Activated CD4-positive, alpha-beta memory T cell treated with anti-CD3 and anti-CD28 coated beads for 36 hours (primary cell): ENCODE measurements at regions of chr1 and their contacts with region 1.

Region 1: DNA sequence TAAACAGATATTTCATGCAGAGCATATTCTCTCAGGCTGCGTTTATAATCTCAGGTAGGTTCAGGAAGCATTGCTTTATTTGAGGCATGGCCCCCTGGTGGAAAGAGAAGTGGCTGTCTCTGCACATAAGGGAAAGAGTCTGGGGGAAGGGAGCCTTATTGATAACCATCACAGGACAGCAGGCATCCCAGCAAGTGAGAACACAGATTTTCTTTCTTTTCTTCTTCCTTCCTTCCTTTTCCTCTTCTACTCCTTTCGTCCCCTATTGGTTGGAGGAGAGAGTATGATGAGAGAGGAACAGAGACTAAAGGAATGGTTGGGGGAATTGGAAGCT is 21.9 kb downstream of the TSNAX start:
- DNase-seq: peak; percentile 24
- H3K4me3 Mint-ChIP-seq: no peak overlapping the region
- H3K27ac Mint-ChIP-seq: no peak overlapping the region
- H3K4me1 Mint-ChIP-seq: peaks cover 20% of the 10 kb centered on the region
- H3K27me3 Mint-ChIP-seq: no peaks in the 10 kb centered on the region

Region 2: GRCh38 chr1:231566496-231566895 is 16.1 kb after region 1 on chr1:
- CTCF ChIA-PET with region 1: no interaction called
- POLR2A ChIA-PET with region 1: no interaction called
- intact Hi-C with region 1: loop called (anchors 1 kb)
- DNase-seq: no peak
- H3K4me3 Mint-ChIP-seq: no peak overlapping the region
- H3K27ac Mint-ChIP-seq: no peak overlapping the region
- H3K4me1 Mint-ChIP-seq: peaks cover 14% of the 10 kb centered on the region
- H3K27me3 Mint-ChIP-seq: no peaks in the 10 kb centered on the region